ENCODE measurements at regions of chr19 and their contacts with region 1.

Region 1: GRCh38 chr19:47790398-47790814 is 11.9 kb downstream of the SELENOW start:
- DNase-seq: peak; percentile 83 to 85 (median 84)
- H3K4me3 ChIP-seq: no peak overlapping the region
- H3K27ac ChIP-seq: no peak overlapping the region
- H3K4me1 ChIP-seq: no peaks in the 10 kb centered on the region
- H3K27me3 ChIP-seq: no peaks in the 10 kb centered on the region

Region 2: GRCh38 chr19:47713046-47714021 is 77.1 kb before region 1 on chr19 and contains the start of gene EHD2:
- CTCF ChIA-PET with region 1: interaction called, 16 read pairs
- POLR2A ChIA-PET with region 1: no interaction called
- DNase-seq: peak; percentile 58 to 69 (median 67)
- H3K4me3 ChIP-seq: peak within 1 kb of the TSS; percentile 4 to 93 (median 67)
- H3K27ac ChIP-seq: peak within 1 kb of the TSS in 1 of 2 experiments; percentile 61
- H3K4me1 ChIP-seq: peaks cover 0 to 6% (median 3%) of the 10 kb centered on the region in 4 experiments
- H3K27me3 ChIP-seq: no peaks in the 10 kb centered on the region

Region 3: DNA sequence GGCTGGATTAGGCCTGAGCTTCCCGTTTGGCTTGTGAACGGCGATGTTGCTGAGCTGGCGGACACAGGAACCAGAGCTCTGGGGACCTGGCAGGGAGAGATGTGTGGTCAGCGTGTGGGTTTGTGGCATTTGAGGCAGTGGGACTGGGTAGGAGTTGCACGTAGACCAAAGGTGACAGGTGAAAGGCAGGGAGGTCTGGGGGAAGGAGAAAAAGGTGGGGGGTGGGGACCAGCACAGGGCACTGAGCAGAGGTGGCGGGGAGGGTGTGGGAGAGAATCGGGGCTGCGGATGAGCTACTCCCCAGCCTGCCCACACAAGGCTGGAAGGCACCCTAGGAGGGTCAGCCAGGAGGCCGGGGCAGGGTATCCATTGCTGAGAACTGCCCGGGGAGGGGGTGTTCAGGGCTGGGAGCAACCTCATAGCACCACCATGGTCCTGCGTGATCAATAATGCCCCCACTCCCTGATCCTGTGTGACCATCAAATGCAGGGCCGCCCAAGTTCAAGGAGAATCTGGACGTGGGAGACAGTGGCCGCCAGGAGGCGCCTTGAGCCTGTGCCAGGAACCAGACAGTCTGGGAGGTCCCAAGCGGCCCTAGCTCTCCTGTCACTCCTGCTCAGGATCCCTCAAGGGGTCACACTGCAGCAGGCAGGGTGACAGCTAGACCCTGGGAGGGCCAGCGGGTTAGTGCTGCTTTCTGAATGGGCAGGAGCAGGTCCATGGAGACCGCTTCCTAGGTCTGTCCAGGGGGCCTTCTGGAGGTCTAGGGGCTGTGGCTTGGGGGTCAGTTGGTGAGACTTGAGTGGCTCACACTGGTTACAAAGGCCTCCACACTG is 24.7 kb before region 1 on chr19:
- CTCF ChIA-PET with region 1: interaction called, 11 read pairs
- POLR2A ChIA-PET with region 1: no interaction called
- DNase-seq: peak; percentile 30 to 65 (median 56)
- H3K4me3 ChIP-seq: no peak overlapping the region
- H3K27ac ChIP-seq: no peak overlapping the region
- H3K4me1 ChIP-seq: peaks cover 0 to 4% (median 2%) of the 10 kb centered on the region in 4 experiments
- H3K27me3 ChIP-seq: no peaks in the 10 kb centered on the region